Posterior cingulate gyrus (tissue), 11 donors: ENCODE measurements at regions of chr19 and their contacts with region 1.

Region 1: DNA sequence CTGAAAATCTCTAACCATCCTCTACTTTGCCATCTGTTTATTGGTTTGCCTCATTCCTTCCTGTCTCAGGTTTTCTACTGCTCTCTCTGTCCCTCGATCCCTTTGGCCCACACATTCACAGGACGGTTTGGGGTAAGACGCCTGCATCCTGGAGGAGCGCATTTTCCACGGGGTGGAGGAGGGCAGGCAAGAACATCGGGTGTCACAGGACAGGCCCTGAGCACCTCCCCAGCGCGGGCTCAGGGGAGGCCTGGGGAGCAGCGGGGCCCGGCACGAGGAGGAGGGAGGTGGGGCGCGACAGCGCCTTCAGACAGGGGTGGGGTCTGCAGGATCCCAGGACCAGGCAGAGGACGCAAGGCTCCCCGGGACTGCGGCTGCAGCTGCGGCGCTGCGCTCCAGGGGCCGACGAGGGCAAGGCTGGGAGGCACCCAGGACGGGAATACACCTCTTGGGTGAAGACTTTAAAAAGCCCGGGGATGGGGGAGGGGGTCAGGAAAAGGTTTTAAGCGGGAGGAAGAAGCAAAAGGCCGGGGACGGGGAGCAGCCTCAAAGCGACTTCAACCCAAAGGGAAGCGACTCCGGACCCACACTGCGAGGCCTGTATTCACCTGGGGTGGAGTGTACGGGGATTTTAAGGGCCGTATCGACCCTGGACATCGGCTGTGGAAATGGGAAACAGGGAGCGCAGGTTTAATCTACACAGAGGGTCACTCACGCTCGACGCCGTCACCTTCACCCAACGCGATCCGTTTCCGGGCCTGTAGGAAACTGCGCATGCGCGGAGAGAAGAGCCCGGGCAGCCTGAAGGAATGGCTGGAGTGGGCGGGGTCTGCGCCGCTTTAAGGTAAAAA is at the start of gene ZNF415:
- DNase-seq: peak; percentile 74 to 98 (median 84)

Region 2: GRCh38 chr19:53076977-53077376 is 55.4 kb before region 1 on chr19:
- intact Hi-C with region 1: loop called (anchors 10 kb)
- DNase-seq: peak; percentile 41 to 96 (median 74)

Region 3: DNA sequence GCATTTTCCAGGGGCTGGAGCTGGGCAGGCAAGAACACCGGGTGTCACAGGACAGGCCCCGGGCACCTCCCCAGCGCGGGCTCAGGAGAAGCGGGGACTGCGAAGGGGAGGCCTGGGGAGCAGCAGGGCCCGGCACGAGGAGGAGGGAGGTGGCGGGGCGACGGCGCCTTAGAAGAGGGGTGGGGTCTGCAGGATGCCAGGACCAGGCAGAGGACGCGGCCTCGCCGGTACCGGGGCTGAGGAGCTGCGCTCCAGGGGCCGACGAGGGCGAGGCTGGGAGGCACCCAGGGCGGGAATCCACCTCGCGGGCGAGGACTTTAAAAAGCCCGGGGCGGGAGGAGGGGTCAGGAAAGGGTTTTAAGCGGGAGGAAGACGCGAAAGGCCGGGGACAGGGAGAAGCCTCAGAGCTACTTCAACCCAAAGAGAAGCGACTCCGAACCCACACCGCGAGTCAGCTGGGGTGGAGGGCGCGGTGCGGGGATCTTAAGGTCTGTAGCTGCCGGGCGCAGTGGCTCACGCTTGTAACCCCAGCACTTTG is 25.8 kb after region 1 on chr19:
- intact Hi-C with region 1: loop called (anchors 2 kb)
- DNase-seq: peak in 5 of 10 donors; percentile 9 to 86 (median 16)

Region 4: DNA sequence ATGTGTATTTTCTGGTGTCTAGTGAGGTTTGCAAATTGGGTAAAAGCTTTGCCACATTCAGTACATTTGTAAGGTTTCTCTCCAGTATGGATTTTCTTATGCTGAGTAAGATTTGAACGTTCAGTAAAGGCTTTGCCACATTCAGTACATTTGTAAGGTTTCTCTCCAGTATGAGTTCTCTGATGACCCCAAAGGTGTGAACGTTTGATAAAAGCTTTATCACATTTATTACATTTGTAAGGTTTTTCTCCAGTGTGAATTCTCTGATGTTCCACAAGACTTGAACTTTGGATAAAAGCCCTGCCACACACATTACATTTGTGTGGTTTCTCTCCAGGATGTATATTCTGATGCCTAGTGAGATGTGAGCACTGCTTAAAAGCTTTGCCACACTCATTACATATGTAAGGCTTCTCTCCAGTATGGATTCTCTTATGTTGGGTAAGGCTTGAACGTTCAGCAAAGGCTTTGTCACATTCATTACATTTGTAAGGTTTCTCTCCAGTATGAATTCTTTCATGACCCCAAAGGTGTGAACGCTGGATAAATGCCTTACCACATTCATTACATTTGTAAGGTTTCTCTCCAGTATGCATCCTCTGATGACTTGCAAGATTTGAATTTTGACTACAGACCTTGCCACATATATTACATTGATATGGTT is 104.9 kb after region 1 on chr19:
- intact Hi-C with region 1: no loop called
- DNase-seq: no peak